PC-9 (cell line): ENCODE measurements at regions of chr15 and their contacts with region 1.

Region 1: GRCh38 chr15:59335207-59335786 is 37.4 kb downstream of the MYO1E start:
- DNase-seq: no peak
- H3K4me3 ChIP-seq: no peak overlapping the region
- H3K27ac ChIP-seq: no peak overlapping the region
- H3K4me1 ChIP-seq: no peaks in the 10 kb centered on the region
- H3K27me3 ChIP-seq: no peaks in the 10 kb centered on the region
- CTCF ChIP-seq: no peak

Region 2: DNA sequence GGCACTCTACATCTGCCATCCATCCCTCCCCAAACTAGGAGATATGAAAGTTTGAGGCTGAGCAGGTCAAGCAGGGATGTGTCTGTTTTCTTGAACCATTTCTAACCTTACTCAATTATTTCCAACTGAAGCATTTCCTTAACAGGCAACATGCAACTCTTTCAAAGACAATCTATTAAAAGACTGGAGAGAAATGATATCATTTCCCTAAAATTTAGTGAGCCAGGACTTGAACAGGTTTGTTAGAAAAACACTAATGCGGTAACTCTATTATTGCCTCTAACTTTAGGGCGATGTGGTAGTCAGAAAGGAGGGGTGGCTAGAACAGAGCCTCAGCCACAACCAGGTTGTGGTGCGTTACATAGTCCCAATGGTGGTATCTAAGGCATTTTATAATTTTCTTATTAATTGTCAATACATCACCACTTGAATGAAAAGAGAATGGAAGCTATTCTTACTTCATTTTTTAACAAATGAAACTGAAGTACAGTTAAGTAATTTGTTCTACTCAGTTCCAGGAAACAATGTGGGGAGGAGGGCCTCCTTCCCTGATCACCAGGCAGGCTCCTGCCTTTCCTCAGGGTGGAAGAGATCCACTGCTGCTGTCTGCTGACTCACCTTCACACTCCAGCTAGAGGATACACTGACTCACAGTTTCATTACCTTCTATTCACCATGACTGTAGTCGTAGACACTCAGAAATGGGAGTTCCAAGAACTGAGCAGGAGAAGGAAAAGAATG is 14.6 kb after region 1 on chr15:
- CTCF ChIA-PET with region 1: interaction called, 13 read pairs
- POLR2A ChIA-PET with region 1: no interaction called
- intact Hi-C with region 1: no loop called
- DNase-seq: peak; percentile 68 to 91
- H3K4me3 ChIP-seq: 0 out of 2 replicates have a peak overlapping the region, but pooled peaks have one; percentile 35
- H3K27ac ChIP-seq: peak overlapping the region; percentile 95
- H3K4me1 ChIP-seq: peaks cover 20% of the 10 kb centered on the region
- H3K27me3 ChIP-seq: no peaks in the 10 kb centered on the region
- CTCF ChIP-seq: no peak

Region 3: GRCh38 chr15:59372352-59373211 is 37.3 kb after region 1 on chr15 and contains the start of gene MYO1E:
- CTCF ChIA-PET with region 1: no interaction called
- POLR2A ChIA-PET with region 1: no interaction called
- intact Hi-C with region 1: no loop called
- DNase-seq: peak; percentile 91
- H3K4me3 ChIP-seq: peak within 1 kb of the TSS; percentile 97
- H3K27ac ChIP-seq: peak within 1 kb of the TSS; percentile 89
- H3K4me1 ChIP-seq: peaks cover 30% of the 10 kb centered on the region
- H3K27me3 ChIP-seq: no peaks in the 10 kb centered on the region
- CTCF ChIP-seq: no peak
- total RNA-seq, gene MYO1E: 156 and 213 TPM in 2 replicates